ENCODE measurements at regions of chr14 and their contacts with region 1.

Region 1: DNA sequence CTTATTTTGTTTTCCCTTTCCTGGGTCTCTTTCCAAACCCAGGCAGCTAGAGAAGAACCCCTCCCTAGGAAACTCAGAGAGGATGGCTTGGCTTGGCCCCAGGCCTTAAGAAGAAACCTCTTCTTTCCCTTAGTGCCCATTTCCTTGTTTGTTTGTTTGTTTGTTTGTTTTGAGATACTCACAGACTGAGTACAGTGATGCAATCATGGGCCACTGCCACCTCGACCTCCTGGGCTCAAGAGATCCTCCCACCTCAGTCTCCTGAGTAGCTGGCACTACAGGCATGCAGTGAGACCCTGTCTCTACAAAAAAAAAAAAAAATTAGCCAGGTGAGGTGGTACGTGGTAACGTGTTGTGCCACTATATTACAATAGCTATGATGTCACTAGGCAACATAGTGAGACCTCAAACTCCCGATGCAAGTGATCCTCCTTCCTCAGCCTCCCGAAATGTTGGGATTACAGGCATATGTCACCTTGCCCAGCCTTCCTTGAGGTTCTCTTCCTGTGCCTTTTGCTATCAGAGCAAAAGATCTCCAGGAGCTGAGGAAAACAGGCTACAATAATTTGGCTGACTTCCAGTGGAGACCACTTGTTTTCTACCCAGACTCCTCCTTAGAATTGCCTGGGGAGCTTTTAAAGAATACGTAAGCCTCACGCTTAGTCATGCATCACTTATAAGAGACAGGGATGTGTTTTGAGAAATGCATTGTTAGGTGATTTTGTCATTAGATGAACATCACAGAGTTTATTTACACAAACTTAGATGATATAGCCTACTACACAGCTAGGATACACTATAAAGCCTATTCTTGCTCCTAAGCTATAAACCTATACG is 34.5 kb upstream of the LGALS3 start:
- DNase-seq: no peak
- ATAC-seq: no peak
- H3K4me3 Mint-ChIP-seq: no peak overlapping the region
- H3K27ac Mint-ChIP-seq: no peak overlapping the region
- H3K4me1 Mint-ChIP-seq: peaks cover 28% of the 10 kb centered on the region
- H3K27me3 Mint-ChIP-seq: no peaks in the 10 kb centered on the region
- CTCF ChIP-seq: no peak

Region 2: DNA sequence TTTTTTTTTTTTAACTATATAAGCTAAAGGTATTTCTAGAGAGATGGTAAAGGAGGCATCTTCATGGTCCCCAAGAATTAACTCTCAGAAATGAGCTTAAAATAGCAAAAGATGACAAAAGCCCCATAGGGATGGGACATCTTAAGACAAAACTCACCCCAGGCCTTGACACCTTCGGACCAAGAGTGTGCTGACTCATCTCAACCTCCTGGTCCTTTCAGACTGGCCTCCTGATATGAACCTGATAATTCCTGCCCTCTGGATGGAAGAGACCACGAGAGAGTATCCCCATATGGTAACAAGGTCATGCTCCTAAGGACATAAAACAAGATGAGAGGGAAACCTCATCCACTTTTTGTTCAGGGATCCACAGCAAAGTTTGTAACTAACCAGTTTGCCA is 597.3 kb before region 1 on chr14:
- CTCF ChIA-PET with region 1: no interaction called
- POLR2A ChIA-PET with region 1: interaction called, 13 read pairs
- intact Hi-C with region 1: no loop called
- DNase-seq: no peak
- ATAC-seq: no peak
- H3K4me3 Mint-ChIP-seq: no peak overlapping the region
- H3K27ac Mint-ChIP-seq: no peak overlapping the region
- H3K4me1 Mint-ChIP-seq: no peaks in the 10 kb centered on the region
- H3K27me3 Mint-ChIP-seq: peaks cover 16% of the 10 kb centered on the region
- CTCF ChIP-seq: no peak

Region 3: DNA sequence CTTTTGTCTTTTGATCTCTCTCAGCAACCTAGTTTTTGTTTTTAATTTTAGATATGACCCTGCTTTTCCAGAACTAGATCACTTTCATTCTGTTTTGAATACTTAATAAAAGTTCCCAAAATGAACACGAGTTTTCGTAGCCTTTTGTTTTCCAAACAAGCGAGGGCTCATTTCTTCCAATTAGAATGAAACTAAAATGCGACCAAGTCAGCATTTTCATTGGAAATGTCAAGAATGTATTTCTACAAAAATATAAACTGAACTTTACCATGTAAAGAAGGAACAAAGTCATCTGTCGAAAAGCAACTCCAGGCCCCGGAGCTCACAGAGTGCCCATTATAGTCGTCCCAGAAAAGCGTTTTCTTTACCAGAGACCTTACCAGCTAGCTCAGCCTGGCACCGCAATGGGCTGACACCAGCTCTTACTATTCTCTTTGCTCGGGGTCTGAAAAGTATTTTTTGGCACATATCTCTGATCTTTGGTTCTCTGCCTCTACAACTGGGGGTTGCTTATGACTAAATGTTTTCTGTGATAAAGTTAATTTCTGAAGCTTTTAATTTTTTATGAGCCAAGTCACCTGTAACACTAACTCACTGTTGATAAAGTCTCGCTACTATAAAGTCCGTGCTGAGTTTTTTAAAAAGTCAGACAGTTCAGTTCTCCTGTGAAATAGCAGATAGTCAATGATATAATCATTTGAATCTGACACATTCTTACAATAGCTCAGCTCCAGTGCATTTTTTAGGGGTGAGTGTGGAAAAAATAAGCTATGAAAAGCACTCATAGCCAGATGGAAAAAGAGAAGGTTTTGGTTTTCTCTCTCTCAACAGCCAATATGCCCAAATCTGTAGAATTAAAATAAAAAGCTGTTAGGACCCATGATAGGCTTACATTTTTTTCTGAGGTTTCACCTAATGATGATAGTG is 484.2 kb before region 1 on chr14:
- CTCF ChIA-PET with region 1: no interaction called
- POLR2A ChIA-PET with region 1: no interaction called
- intact Hi-C with region 1: no loop called
- DNase-seq: no peak
- ATAC-seq: no peak
- H3K4me3 Mint-ChIP-seq: no peak overlapping the region
- H3K27ac Mint-ChIP-seq: no peak overlapping the region
- H3K4me1 Mint-ChIP-seq: no peaks in the 10 kb centered on the region
- H3K27me3 Mint-ChIP-seq: no peaks in the 10 kb centered on the region
- CTCF ChIP-seq: no peak